ENCODE measurements at regions of chr1 and their contacts with region 1.

Region 1: GRCh38 chr1:66446261-66447001 is 87.5 kb upstream of the SGIP1 start:
- DNase-seq: no peak
- ATAC-seq: peak; percentile 53

Region 2: GRCh38 chr1:65958561-65959350 is 487.7 kb before region 1 on chr1:
- intact Hi-C with region 1: loop called (anchors 2 kb)
- DNase-seq: peak; percentile 42
- ATAC-seq: peak; percentile 31

Region 3: GRCh38 chr1:66253330-66253921 is 193.0 kb before region 1 on chr1:
- intact Hi-C with region 1: loop called (anchors 2 kb)
- DNase-seq: no peak
- ATAC-seq: peak; percentile 90

Measured in left ventricle myocardium superior (tissue), 1 donor.